ENCODE measurements at regions of chr5 and their contacts with region 1.

Region 1: GRCh38 chr5:91419571-91420537 is 36.7 kb upstream of the ARRDC3 start:
- DNase-seq: peak; percentile 83
- ATAC-seq: no peak
- H3K4me3 Mint-ChIP-seq: no peak overlapping the region
- H3K27ac Mint-ChIP-seq: no peak overlapping the region
- H3K4me1 Mint-ChIP-seq: peaks cover 6% of the 10 kb centered on the region
- H3K27me3 Mint-ChIP-seq: no peaks in the 10 kb centered on the region

Region 2: DNA sequence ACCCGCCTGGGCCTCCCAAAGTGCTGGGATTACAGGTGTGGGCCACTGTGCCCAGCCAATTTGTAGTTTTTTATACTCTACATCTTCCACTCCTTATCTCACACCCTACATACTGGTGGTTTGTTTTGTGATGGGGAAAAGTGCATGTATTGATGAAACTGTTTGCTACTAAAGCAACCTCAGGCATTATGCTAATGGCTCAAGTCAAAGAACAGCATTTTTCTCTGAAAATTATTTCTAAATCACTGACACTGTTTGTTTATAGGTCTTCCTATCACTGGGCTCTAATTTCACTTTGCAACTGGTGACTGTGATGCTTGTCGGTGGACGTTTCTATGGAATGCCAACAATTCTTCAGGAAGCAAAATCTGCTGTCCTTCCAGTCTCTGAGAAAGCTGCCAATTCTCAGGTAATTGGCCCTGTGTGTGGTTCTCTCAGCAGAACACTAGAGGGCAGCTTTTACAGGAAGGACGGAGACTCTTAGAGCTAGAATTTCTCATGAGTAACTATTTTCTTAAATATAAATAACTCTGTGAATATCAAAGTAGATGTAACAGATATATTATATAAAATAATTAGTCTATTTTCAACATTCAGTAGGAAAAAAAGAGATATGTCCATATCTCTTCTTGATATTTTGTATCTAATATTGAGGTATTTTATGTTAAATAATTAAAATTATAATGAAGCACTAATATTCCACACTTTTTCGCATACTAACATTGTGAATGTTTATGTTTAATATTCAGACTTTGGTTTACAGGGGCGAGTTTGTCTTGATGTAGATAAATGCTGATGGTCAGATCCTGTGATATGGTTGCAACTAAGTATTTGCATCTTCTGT is 617.2 kb before region 1 on chr5:
- CTCF ChIA-PET with region 1: interaction called, 19 read pairs
- POLR2A ChIA-PET with region 1: no interaction called
- intact Hi-C with region 1: loop called (anchors 5 kb)
- DNase-seq: peak; percentile 10
- ATAC-seq: peak; percentile 36
- H3K4me3 Mint-ChIP-seq: no peak overlapping the region
- H3K27ac Mint-ChIP-seq: no peak overlapping the region
- H3K4me1 Mint-ChIP-seq: no peaks in the 10 kb centered on the region
- H3K27me3 Mint-ChIP-seq: peaks cover 5% of the 10 kb centered on the region

Region 3: DNA sequence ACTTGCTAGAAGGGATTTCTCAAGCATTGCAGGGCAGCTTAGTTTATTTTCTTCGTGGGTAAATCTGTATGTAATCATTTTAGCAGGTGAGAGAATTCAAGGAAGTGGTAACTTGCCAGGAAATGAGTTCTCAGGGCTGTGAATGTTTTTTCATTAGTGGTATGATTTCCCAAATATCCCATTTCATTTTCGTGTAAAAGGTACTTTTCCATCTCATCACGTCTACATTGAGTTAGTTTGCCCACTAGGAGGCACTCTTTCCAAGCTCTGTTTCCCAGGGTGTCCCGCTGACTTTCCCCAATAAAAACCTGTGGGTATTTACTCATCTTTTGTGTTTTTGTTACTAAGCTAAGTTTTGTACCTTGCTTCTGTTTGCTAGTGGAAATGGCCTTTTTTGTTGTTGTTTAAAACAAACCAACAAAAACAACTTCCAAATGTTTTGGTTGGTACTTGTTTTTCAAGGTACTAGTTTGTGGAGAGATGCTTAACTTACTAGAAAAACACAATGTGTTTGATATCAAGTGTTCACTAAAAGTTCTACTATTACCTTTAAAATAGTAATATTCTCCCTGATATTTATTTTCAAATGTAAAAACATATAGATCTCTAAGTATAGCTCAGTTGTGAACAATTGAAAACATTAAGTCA is 487.7 kb before region 1 on chr5:
- CTCF ChIA-PET with region 1: interaction called, 35 read pairs
- POLR2A ChIA-PET with region 1: no interaction called
- intact Hi-C with region 1: loop called (anchors 1 to 2 kb)
- DNase-seq: peak; percentile 52
- ATAC-seq: peak; percentile 71
- H3K4me3 Mint-ChIP-seq: no peak overlapping the region
- H3K27ac Mint-ChIP-seq: no peak overlapping the region
- H3K4me1 Mint-ChIP-seq: peaks cover 2% of the 10 kb centered on the region
- H3K27me3 Mint-ChIP-seq: peaks cover 3% of the 10 kb centered on the region

Region 4: DNA sequence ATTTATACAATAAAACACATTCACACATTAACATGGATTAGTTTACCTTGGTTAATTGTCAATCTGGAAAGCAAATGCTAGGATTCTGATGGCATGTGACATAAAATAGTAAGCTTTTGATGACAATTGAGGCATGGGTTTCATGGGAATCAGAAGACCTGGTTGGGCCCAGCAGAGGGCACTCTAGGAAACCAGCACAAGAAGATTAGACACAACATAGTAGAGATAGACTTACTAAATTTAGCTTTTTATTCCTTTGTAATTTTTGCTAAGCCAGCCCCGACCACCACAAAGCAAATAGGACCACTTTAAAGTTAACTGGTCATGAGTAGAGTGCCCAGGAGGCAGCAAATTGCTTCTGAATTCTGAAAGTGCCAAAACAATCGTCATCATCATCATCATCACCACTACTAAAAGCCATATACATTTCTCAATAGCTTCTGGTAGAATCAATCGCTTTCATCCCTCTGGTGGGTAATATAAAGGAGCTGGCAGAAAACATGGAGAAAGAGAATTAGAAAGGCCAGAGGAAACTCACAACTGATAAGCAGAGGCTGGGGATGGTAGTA is 200.0 kb before region 1 on chr5:
- CTCF ChIA-PET with region 1: interaction called, 27 read pairs
- POLR2A ChIA-PET with region 1: no interaction called
- intact Hi-C with region 1: no loop called
- DNase-seq: peak; percentile 66
- ATAC-seq: peak; percentile 51
- H3K4me3 Mint-ChIP-seq: no peak overlapping the region
- H3K27ac Mint-ChIP-seq: no peak overlapping the region
- H3K4me1 Mint-ChIP-seq: no peaks in the 10 kb centered on the region
- H3K27me3 Mint-ChIP-seq: no peaks in the 10 kb centered on the region

Region 5: GRCh38 chr5:91397791-91398190 is 22.1 kb before region 1 on chr5:
- CTCF ChIA-PET with region 1: interaction called, 13 read pairs
- POLR2A ChIA-PET with region 1: no interaction called
- intact Hi-C with region 1: no loop called
- DNase-seq: no peak
- ATAC-seq: no peak
- H3K4me3 Mint-ChIP-seq: no peak overlapping the region
- H3K27ac Mint-ChIP-seq: no peak overlapping the region
- H3K4me1 Mint-ChIP-seq: peaks cover 7% of the 10 kb centered on the region
- H3K27me3 Mint-ChIP-seq: no peaks in the 10 kb centered on the region

Region 6: GRCh38 chr5:91409304-91409703 is 10.6 kb before region 1 on chr5:
- CTCF ChIA-PET with region 1: interaction called, 21 read pairs
- POLR2A ChIA-PET with region 1: no interaction called
- intact Hi-C with region 1: no loop called
- DNase-seq: no peak
- ATAC-seq: no peak
- H3K4me3 Mint-ChIP-seq: no peak overlapping the region
- H3K27ac Mint-ChIP-seq: no peak overlapping the region
- H3K4me1 Mint-ChIP-seq: no peaks in the 10 kb centered on the region
- H3K27me3 Mint-ChIP-seq: no peaks in the 10 kb centered on the region